RWPE1 (cell line): ENCODE measurements at regions of chr11 and their contacts with region 1.

Region 1: GRCh38 chr11:74055938-74056337 is 47.1 kb upstream of the UCP3 start:
- DNase-seq: peak; percentile 30
- H3K27ac ChIP-seq: no peak overlapping the region
- CTCF ChIP-seq: no peak

Region 2: GRCh38 chr11:73011126-73011817 is 1044.7 kb before region 1 on chr11:
- CTCF ChIA-PET with region 1: interaction called, 10 read pairs
- POLR2A ChIA-PET with region 1: no interaction called
- DNase-seq: no peak
- H3K27ac ChIP-seq: no peak overlapping the region
- CTCF ChIP-seq: no peak